IMR-90 (cell line): ENCODE measurements at regions of chr5 and their contacts with region 1.

Region 1: DNA sequence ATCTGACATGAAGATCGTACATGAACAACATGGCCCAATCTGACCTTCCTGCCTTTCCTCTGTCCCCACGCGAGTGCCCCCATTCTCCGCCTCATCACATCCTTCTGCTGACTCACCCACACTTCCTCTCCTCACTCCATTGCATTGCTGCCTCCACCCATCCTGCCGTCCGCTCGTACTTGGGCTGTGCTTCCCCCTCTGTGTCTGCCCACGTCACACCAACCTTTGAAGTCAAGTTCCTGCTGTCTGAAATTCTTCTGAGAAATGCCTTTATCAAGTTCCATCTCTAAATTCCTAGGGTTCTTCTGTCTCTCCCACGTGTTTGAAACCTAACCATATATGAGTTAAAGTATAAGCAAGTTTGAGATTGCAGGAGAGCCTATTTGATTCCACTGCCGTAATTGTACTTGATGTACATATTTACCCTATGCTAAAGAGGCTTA is 18.0 kb upstream of the STARD4 start:
- DNase-seq: peak; percentile 41
- ATAC-seq: no peak
- H3K4me3 ChIP-seq: no peak overlapping the region
- H3K27ac ChIP-seq: no peak overlapping the region
- H3K4me1 ChIP-seq: peaks cover 1% of the 10 kb centered on the region; the same call in 1 of the 2 replicates
- H3K27me3 ChIP-seq: no peaks in the 10 kb centered on the region
- CTCF ChIP-seq: no peak
- POLR2A ChIP-seq: no peak
- RAD21 ChIP-seq: no peak

Region 2: GRCh38 chr5:111517853-111518501 is 12.3 kb before region 1 on chr5:
- CTCF ChIA-PET with region 1: interaction called, 10 read pairs
- POLR2A ChIA-PET with region 1: no interaction called
- dilution Hi-C with region 1: no loop called
- in situ Hi-C with region 1: no loop called
- intact Hi-C with region 1: no loop called
- DNase-seq: no peak
- ATAC-seq: no peak
- H3K4me3 ChIP-seq: no peak overlapping the region
- H3K27ac ChIP-seq: no peak overlapping the region
- H3K4me1 ChIP-seq: no peaks in the 10 kb centered on the region
- H3K27me3 ChIP-seq: no peaks in the 10 kb centered on the region
- CTCF ChIP-seq: no peak
- POLR2A ChIP-seq: no peak
- RAD21 ChIP-seq: no peak

Region 3: DNA sequence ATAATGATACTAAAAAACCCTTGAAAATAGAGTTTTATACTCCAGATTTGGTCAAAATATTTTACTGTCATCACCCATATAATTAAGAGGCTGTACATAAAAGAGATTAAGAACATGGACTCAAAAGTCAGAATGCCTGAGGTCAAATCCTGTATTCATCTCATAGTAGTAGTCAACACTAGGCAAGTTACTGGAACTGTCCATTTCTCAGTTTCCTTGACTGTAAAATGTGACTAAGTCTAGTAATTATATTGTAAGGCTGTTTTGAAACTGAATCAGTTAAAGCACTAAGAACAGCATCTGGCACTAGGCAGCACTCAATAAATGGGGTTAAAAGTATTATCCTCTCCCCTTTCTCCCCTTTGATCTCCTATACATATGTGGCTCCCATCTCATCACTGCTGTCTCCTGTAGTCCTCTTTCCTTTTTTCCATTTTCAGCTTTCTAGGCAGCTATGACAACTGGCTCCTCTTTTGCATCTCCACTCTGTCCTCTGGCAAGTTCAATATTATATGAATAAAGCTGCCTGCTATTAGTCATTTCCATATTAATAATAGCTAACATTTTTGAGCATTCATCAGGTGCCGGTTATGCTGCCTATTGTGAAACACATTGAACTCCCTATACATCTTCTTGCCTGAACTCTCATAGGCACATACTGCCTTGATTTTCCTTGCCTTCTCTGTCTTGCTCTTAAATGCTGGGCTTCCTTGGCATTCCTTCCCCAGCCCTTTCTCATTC is 412.5 kb after region 1 on chr5:
- CTCF ChIA-PET with region 1: no interaction called
- POLR2A ChIA-PET with region 1: no interaction called
- dilution Hi-C with region 1: no loop called
- in situ Hi-C with region 1: no loop called
- intact Hi-C with region 1: no loop called
- DNase-seq: peak; percentile 47
- ATAC-seq: peak; percentile 42; the same call in 1 of the 2 replicates
- H3K4me3 ChIP-seq: no peak overlapping the region
- H3K27ac ChIP-seq: no peak overlapping the region
- H3K4me1 ChIP-seq: peaks cover 2% of the 10 kb centered on the region; the same call in 1 of the 2 replicates
- H3K27me3 ChIP-seq: no peaks in the 10 kb centered on the region
- CTCF ChIP-seq: no peak
- POLR2A ChIP-seq: no peak
- RAD21 ChIP-seq: no peak